Stomach (tissue), 19 donors: ENCODE measurements at regions of chr16 and their contacts with region 1.

Region 1: GRCh38 chr16:2784951-2785635 is 2.3 kb downstream of the PRSS33 start:
- DNase-seq: peak in 1 of 2 donors; percentile 72
- H3K4me3 ChIP-seq: peak overlapping the region; percentile 37 to 49 (median 39)
- H3K27ac ChIP-seq: no peak overlapping the region
- H3K4me1 ChIP-seq: peaks cover 12 to 25% (median 15%) of the 10 kb centered on the region in 4 donors
- H3K27me3 ChIP-seq: peaks cover 10 to 65% (median 33%) of the 10 kb centered on the region in 3 donors
- CTCF ChIP-seq: no peak
- EP300 ChIP-seq: no peak
- POLR2A ChIP-seq: no peak

Region 2: GRCh38 chr16:2829501-2830356 is 44.6 kb after region 1 on chr16 and contains the start of gene ZG16B:
- intact Hi-C with region 1: no loop called
- DNase-seq: peak; percentile 69 to 77
- H3K4me3 ChIP-seq: peak within 1 kb of the TSS in 1 of 4 donors; percentile 29
- H3K27ac ChIP-seq: peak within 1 kb of the TSS in 4 of 5 donors; percentile 67 to 81 (median 74)
- H3K4me1 ChIP-seq: peaks cover 6 to 19% (median 17%) of the 10 kb centered on the region in 4 donors
- H3K27me3 ChIP-seq: peaks cover 0 to 75% (median 0%) of the 10 kb centered on the region in 3 donors
- CTCF ChIP-seq: no peak
- EP300 ChIP-seq: no peak
- POLR2A ChIP-seq: no peak
- total RNA-seq, gene ZG16B: 15.6 to 39.0 TPM in 2 of 5 donors, not detected in the others

Region 3: DNA sequence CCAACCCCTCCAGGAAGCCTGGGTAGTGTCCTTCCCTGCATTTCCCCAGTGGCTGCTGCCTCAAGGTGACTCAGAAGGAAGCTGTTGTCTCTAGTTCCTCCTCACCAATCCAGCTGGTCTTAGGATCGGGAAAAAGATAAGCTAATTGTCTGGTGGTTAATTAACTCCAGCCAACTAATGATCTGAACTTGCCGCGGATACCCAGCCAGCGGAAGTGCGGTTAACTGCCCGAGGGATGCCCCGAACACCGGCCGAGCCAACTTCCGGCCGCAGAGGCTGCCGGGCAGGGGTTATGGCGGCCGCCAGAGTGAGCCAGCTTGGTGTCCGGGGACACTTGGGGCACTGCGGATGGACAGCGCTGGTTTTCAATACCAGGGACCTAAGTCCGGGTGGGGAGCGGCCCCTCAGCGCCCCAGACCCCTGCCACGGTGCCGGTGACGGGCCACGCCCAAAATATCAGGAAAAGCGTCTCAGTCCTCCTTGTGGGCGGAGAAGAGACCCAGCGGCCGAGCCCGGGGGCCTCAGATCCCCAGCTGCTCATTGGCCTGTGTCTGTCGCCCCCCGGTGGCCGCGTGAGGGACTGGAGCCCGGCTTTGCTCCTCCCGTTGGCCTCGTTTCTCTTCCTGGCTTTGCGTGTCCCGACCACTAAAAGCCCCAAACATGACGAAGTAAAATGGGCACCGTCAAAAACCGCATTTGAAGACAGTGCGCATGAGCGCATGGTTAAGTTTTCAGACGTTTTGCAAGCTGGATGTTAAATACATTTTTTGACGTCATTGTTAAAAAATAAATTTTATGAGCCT is 83.1 kb after region 1 on chr16:
- intact Hi-C with region 1: loop called (anchors 10 kb)
- DNase-seq: peak; percentile 96 to 97
- H3K4me3 ChIP-seq: peak overlapping the region; percentile 58 to 73 (median 60)
- H3K27ac ChIP-seq: peak overlapping the region; percentile 93 to 95 (median 94)
- H3K4me1 ChIP-seq: peaks cover 5 to 12% (median 9%) of the 10 kb centered on the region in 4 donors
- H3K27me3 ChIP-seq: peaks cover 0 to 14% (median 0%) of the 10 kb centered on the region in 3 donors
- CTCF ChIP-seq: peak in 5 of 7 experiments; percentile 94 to 99 (median 97)
- EP300 ChIP-seq: no peak
- POLR2A ChIP-seq: peak in 1 of 4 donors; percentile 14